Caco-2 (cell line): ENCODE measurements at regions of chr19 and their contacts with region 1.

Region 1: GRCh38 chr19:54189735-54190502 is 539 bp upstream of the MBOAT7 start:
- DNase-seq: peak; percentile 100
- H3K4me3 ChIP-seq: peak overlapping the region; percentile 97
- H3K4me3 Mint-ChIP-seq: peak overlapping the region; percentile 85
- H3K27ac Mint-ChIP-seq: peak overlapping the region; percentile 98
- H3K4me1 ChIP-seq: 0 out of 2 replicates have a peak, but pooled peaks cover 6% of the 10 kb centered on the region
- H3K4me1 Mint-ChIP-seq: peaks cover 34% of the 10 kb centered on the region
- H3K27me3 ChIP-seq: no peaks in the 10 kb centered on the region
- H3K27me3 Mint-ChIP-seq: no peaks in the 10 kb centered on the region
- CTCF ChIP-seq: no peak

Region 2: DNA sequence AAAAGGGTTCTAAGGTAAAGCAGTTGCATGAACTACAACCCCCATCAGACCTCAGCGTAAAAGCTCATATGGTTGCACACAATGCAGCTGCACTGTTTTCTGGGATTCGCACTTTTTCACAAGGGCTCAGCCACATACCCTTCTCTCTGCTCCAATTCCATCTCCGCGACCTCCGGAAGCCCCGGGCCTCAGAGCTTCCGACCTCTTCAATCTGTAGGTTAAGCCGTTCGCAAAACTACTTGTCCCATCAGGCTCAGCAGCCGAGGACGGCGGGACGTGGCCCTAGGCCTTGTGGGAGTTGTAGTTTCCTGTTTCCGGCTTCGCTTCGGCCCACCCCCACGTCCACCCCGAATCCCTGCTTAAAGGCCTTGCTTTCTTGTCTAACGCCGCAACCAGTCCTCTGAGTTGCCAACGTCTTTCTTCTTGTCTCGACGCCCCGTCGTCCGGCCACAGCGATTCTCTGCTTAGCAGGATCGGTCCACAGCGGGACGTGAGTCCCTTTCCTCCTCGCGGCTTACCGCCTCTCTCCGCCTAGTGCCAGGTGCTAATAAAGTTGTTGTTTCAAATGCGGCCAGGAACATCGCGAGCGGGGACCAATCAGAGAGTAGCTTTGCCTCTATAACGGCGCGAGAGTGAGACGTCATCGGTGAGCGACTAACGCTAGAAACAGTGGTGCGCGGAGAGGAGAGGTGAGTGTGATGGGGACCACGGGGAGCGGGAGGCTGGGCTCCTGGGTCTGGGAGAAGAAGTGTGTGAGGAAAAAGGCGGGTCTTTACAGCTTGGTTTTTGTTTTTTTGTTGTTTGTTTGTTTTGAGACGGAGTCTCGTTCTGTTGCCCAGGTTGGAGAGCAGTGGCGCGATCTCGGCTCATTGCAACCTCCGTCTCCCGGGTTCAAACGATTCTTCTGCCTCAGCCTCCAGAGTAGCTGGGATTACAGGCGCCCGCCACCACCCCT is 74.5 kb before region 1 on chr19 and contains the starts of genes PRPF31 and TFPT:
- CTCF ChIA-PET with region 1: no interaction called
- POLR2A ChIA-PET with region 1: interaction called, 4 read pairs
- intact Hi-C with region 1: loop called (anchors 1 kb)
- DNase-seq: peak; percentile 95 to 98
- H3K4me3 ChIP-seq: peak within 1 kb of the TSS; percentile 43
- H3K4me3 Mint-ChIP-seq: peak within 1 kb of the TSS; percentile 95
- H3K27ac Mint-ChIP-seq: peak within 1 kb of the TSS; percentile 96
- H3K4me1 ChIP-seq: 0 out of 2 replicates have a peak, but pooled peaks cover 7% of the 10 kb centered on the region
- H3K4me1 Mint-ChIP-seq: peaks cover 16% of the 10 kb centered on the region
- H3K27me3 ChIP-seq: no peaks in the 10 kb centered on the region
- H3K27me3 Mint-ChIP-seq: no peaks in the 10 kb centered on the region
- CTCF ChIP-seq: no peak
- total RNA-seq, gene PRPF31: 95.0 and 99.0 TPM in 2 replicates
- total RNA-seq, gene TFPT: 23.0 and 26.0 TPM in 2 replicates

Region 3: GRCh38 chr19:54159352-54160181 is 30.4 kb before region 1 on chr19 and contains the start of gene LENG1:
- CTCF ChIA-PET with region 1: interaction called, 7 read pairs
- POLR2A ChIA-PET with region 1: interaction called, 23 read pairs
- intact Hi-C with region 1: loop called (anchors 1 kb)
- DNase-seq: peak; percentile 99 to 100
- H3K4me3 ChIP-seq: peak within 1 kb of the TSS; percentile 62
- H3K4me3 Mint-ChIP-seq: peak within 1 kb of the TSS; percentile 79
- H3K27ac Mint-ChIP-seq: peak within 1 kb of the TSS; percentile 87
- H3K4me1 ChIP-seq: peaks cover 24% of the 10 kb centered on the region
- H3K4me1 Mint-ChIP-seq: peaks cover 39% of the 10 kb centered on the region
- H3K27me3 ChIP-seq: no peaks in the 10 kb centered on the region
- H3K27me3 Mint-ChIP-seq: no peaks in the 10 kb centered on the region
- CTCF ChIP-seq: peak in 1 of 2 experiments; percentile 34
- total RNA-seq, gene LENG1: 6.6 and 6.9 TPM in 2 replicates

Region 4: DNA sequence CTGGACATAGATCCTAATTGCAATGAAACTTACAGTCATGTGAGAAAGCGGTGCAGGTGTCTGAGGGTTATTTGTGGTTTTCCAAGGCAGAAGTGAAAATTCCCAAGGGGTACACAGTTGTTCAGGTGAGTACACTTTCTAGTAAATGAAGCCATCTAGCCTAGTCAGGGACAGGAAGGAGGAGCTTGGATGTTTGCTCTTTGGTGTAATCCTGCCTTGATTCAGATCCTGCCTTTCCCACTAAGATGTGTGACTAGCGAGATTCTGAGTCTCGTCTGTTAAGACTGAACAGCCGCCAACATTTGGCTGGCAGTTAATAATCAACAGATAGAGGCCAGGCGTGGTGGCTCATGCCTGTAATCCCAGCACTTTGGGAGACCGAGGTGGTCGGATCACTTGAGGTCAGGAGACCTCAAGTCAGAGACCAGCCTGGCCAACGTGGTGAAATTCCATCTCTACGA is 13.3 kb after region 1 on chr19:
- CTCF ChIA-PET with region 1: interaction called, 5 read pairs
- POLR2A ChIA-PET with region 1: interaction called, 98 read pairs
- intact Hi-C with region 1: loop called (anchors 1 kb)
- DNase-seq: no peak
- H3K4me3 ChIP-seq: no peak overlapping the region; the same call in 1 of the 2 replicates
- H3K4me3 Mint-ChIP-seq: peak overlapping the region; percentile 89
- H3K27ac Mint-ChIP-seq: peak overlapping the region; percentile 41
- H3K4me1 ChIP-seq: peaks cover 60% of the 10 kb centered on the region
- H3K4me1 Mint-ChIP-seq: peaks cover 37% of the 10 kb centered on the region
- H3K27me3 ChIP-seq: no peaks in the 10 kb centered on the region
- H3K27me3 Mint-ChIP-seq: no peaks in the 10 kb centered on the region
- CTCF ChIP-seq: no peak

Region 5: DNA sequence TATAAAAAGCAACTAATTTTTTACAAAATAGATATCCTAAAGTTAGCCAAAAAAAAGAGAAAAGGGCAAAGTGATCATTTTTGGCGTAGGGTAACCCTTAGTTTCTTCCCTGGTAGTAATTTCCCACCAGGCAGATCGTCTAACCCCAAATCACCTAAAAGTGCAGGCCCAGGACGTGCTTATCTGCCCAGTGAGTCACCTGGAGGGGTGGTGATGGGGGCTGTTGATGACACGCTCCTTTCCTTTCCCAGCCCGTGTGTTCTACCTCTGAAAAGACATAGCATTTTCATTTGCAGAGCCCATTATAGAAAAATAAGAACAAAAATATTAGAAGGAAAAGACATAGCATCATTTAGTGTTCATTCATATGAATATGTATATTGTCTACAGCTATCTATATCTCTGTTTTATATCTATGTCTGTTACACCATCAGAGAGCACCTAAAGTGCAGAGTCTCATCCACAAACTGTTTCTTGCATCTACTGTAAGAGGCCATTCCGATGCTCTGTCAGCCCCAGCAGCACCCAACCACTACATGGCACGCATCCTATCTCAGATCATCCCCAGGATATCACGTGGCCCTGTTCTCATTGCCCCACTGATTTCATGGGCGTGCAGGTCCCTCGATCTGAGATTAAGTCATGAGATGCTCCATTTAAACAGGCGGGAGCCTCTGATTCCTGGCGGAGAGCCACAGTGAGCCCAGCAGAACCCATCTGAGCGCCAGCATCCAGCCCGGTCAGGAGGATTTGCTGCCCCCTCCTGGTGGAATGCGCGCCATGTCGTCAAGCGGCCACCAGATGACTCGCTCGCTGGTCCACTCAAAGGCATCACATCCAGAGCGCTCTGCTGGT is 41.4 kb after region 1 on chr19:
- CTCF ChIA-PET with region 1: interaction called, 3 read pairs
- POLR2A ChIA-PET with region 1: interaction called, 3 read pairs
- intact Hi-C with region 1: loop called (anchors 1 kb)
- DNase-seq: peak; percentile 86 to 91
- H3K4me3 ChIP-seq: no peak overlapping the region
- H3K4me3 Mint-ChIP-seq: no peak overlapping the region
- H3K27ac Mint-ChIP-seq: no peak overlapping the region
- H3K4me1 ChIP-seq: peaks cover 9% of the 10 kb centered on the region
- H3K4me1 Mint-ChIP-seq: peaks cover 24% of the 10 kb centered on the region
- H3K27me3 ChIP-seq: no peaks in the 10 kb centered on the region
- H3K27me3 Mint-ChIP-seq: peaks cover 3% of the 10 kb centered on the region
- CTCF ChIP-seq: peak; percentile 87 to 90

Region 6: DNA sequence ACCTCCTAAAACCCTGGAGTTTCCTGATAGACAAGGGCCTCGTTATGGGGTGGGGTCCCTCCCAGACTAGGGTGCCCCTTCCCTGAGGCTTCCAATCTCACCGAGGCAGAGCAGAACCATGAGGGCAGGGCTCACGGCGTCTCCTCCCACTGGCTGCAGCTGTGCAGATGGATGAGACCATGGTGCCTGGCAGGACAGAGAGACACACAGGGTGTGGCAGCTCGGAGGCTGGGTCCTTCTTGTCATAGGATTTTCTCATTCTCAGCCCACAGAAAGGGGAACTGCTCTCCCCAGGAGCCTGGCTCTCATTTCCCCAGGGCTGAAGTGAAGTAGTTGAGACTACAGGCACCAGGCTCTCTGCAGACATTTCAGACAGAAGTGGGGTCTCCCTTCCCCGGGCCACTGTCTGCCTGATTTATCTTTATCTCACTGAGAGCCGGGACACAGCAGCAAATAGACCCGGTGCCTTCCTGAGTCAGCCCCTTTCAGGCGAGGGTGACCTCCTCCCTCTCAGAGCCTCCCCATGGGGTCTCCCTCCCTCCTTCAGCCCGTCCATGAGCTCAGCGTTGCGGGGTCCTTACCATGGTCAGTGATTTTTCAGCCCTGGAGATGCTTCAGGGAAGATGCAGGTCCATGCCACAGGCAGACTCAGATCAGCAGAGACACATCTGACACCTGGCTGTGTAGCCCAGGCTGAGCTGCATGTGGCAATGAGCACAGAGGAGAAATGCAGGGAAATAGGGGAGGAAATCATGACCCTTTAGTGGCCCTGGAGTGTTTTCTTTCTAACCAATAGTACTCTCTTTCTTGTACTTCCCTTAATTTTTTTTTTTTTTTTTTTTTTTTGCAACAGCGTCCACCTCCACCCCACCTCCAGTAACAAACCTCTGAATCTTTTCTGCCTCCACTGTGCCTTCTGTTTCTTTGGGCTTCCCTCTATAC is 122.8 kb after region 1 on chr19 and contains the start of gene LILRA5:
- CTCF ChIA-PET with region 1: no interaction called
- POLR2A ChIA-PET with region 1: no interaction called
- intact Hi-C with region 1: no loop called
- DNase-seq: no peak
- H3K4me3 ChIP-seq: no peak within 1 kb of the TSS
- H3K4me3 Mint-ChIP-seq: no peak within 1 kb of the TSS
- H3K27ac Mint-ChIP-seq: no peak within 1 kb of the TSS
- H3K4me1 ChIP-seq: no peaks in the 10 kb centered on the region
- H3K4me1 Mint-ChIP-seq: no peaks in the 10 kb centered on the region
- H3K27me3 ChIP-seq: no peaks in the 10 kb centered on the region
- H3K27me3 Mint-ChIP-seq: peaks cover 16% of the 10 kb centered on the region
- CTCF ChIP-seq: no peak
- total RNA-seq, gene LILRA5: not detected in 2 replicates

Region 7: GRCh38 chr19:54448774-54449700 is 259.1 kb after region 1 on chr19 and contains the start of gene LENG8:
- CTCF ChIA-PET with region 1: interaction called, 3 read pairs
- POLR2A ChIA-PET with region 1: interaction called, 10 read pairs
- intact Hi-C with region 1: no loop called
- DNase-seq: peak; percentile 97
- H3K4me3 ChIP-seq: peak within 1 kb of the TSS; percentile 71
- H3K4me3 Mint-ChIP-seq: peak within 1 kb of the TSS; percentile 92
- H3K27ac Mint-ChIP-seq: peak within 1 kb of the TSS; percentile 94
- H3K4me1 ChIP-seq: peaks cover 27% of the 10 kb centered on the region
- H3K4me1 Mint-ChIP-seq: peaks cover 13% of the 10 kb centered on the region
- H3K27me3 ChIP-seq: no peaks in the 10 kb centered on the region
- H3K27me3 Mint-ChIP-seq: no peaks in the 10 kb centered on the region
- CTCF ChIP-seq: no peak
- total RNA-seq, gene LENG8: 143 and 148 TPM in 2 replicates